ENCODE measurements at regions of chr2 and their contacts with region 1.

Region 1: GRCh38 chr2:99818842-99819241 is 323.5 kb downstream of the AFF3 start:
- DNase-seq: no peak
- ATAC-seq: no peak

Region 2: DNA sequence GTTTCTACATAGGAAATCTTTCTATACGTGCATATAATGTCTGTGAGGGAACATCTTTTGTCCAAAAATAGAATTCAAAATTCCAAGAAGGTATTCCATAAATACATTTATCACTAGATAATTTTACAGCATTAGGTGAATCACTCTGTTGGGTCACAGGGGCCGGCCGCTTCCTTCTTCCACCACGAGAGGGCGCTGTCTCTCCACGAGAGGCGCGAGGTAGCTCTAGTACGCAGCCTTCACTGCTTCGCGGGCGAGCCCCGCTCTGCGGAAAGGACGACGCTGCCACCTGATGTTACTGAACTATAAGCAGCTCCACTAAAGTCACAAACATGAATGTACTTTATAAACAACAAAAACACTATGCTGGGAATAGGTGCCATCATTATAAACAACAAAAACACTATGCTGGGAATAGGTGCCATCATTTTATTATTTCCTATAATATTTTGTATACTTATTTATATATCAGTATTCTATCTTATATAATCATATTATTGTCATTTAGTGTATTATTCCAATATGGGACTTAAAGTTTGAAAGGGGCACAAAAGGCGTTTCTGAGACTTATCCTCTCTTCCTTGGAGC is 259.7 kb before region 1 on chr2:
- intact Hi-C with region 1: loop called (anchors 5 to 10 kb)
- DNase-seq: peak; percentile 87
- ATAC-seq: peak; percentile 96 to 97

Region 3: GRCh38 chr2:99615247-99615771 is 203.5 kb before region 1 on chr2:
- intact Hi-C with region 1: no loop called
- DNase-seq: no peak
- ATAC-seq: no peak

Region 4: DNA sequence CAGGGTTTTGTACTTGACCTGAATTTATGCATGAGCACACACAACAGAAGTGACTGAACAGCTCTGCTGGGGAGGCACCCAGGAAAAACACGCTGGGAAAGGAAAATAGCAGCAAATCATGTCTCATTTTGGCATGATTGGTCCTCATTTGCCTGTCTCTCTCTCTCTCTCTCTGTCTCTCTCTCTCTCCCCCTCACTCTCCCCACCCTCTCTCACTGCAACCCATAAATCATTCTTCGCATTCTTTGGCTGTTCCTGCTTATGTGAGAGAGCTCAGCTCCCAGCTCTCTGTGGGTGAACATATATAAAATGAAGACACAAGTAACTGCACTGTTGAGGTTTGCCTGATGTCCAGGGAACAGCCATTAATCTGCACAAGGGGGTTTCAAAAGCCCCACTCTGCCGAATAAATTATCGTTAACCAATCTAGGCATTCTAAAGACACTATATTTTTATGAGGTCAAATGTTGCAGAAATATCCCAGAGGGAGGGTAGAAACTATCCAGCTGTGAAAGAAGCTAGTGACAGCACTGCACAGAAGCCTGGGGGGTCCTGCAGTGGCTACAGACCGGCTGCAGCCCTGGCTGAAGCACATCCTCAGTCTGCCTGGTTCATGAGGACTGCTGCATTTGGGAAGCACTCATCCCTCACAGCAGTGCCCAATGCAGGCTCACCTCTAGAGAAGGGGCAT is 63.2 kb after region 1 on chr2:
- intact Hi-C with region 1: loop called in 1 of 2 experiments (anchors 10 kb)
- DNase-seq: no peak
- ATAC-seq: peak; percentile 67 to 78

Region 5: GRCh38 chr2:99956232-99957030 is 137.6 kb after region 1 on chr2:
- intact Hi-C with region 1: no loop called
- DNase-seq: no peak
- ATAC-seq: no peak

Region 6: GRCh38 chr2:99988599-99988998 is 169.8 kb after region 1 on chr2:
- intact Hi-C with region 1: no loop called
- DNase-seq: no peak
- ATAC-seq: peak in 1 of 2 donors; percentile 12

Region 7: GRCh38 chr2:100242891-100243619 is 424.2 kb after region 1 on chr2:
- intact Hi-C with region 1: loop called in 1 of 2 experiments (anchors 2 kb)
- DNase-seq: peak; percentile 69
- ATAC-seq: peak; percentile 80 to 88

Measured in left cardiac atrium (tissue), 4 donors.